ENCODE measurements at regions of chr2 and their contacts with region 1.

Region 1: DNA sequence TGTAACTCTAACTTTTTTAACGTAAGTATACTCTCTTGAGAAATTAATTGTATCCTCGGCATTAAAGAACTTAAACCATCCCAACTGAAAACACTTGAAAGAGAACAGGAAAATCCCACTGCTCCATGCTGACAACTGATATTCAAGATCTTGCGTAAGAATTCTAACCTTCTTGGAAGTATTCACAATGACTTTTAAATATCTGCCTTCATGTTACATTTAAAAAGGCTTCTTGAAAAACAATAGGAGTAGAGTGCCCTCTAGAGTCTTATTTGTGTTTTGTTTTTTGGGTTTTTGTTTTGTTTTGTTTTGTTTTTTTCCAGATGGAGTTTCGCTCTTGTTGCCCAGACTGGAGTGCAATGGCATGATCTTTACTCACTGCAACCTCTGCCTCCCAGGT is 65.4 kb upstream of the DNAJC10 start:
- DNase-seq: peak; percentile 24
- ATAC-seq: no peak
- H3K4me3 ChIP-seq: no peak overlapping the region
- H3K4me3 Mint-ChIP-seq: no peak overlapping the region
- H3K27ac ChIP-seq: no peak overlapping the region
- H3K27ac Mint-ChIP-seq: no peak overlapping the region
- H3K4me1 ChIP-seq: no peaks in the 10 kb centered on the region
- H3K4me1 Mint-ChIP-seq: no peaks in the 10 kb centered on the region
- H3K27me3 ChIP-seq: no peaks in the 10 kb centered on the region
- H3K27me3 Mint-ChIP-seq: peaks cover 8% of the 10 kb centered on the region
- CTCF ChIP-seq: peak; percentile 72

Region 2: DNA sequence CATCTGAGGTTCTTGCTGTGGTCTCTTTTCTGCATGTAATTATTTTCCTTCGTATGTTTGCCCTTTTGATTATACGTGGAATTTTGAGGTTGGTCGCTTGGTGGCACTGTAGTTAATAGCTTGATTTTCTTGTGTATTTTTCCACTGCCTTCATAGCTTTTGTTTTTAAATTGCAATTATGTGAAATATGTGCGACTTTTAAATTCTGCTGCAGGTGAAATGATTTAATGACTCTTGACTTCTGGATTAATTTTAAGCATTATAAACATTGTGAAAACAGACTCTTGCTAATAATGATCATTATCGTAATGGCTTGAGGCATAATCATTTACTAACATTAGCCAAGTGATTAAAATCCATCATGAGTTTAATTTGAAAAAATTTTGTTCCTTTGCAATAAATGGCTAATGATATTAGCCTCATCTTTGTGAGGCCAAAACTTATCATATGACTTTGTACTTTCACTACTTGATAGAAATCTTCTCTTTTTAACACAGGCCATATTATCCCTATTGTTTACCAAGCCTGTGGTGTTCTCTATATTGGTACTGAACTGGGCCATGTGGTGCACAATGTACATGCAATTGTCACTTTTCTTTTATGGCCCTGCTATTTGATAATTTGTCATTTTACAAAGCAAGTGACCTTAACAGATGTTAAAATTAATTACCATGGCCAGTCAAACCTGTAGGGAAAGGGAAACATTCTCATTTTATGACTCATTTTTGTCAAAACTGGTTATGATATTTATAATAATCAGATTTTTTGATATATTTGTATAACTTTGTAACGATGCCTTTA is 907.6 kb before region 1 on chr2:
- CTCF ChIA-PET with region 1: no interaction called
- POLR2A ChIA-PET with region 1: no interaction called
- intact Hi-C with region 1: loop called (anchors 2 kb)
- DNase-seq: peak; percentile 49
- ATAC-seq: no peak
- H3K4me3 ChIP-seq: no peak overlapping the region
- H3K4me3 Mint-ChIP-seq: no peak overlapping the region
- H3K27ac ChIP-seq: no peak overlapping the region
- H3K27ac Mint-ChIP-seq: no peak overlapping the region
- H3K4me1 ChIP-seq: no peaks in the 10 kb centered on the region
- H3K4me1 Mint-ChIP-seq: no peaks in the 10 kb centered on the region
- H3K27me3 ChIP-seq: no peaks in the 10 kb centered on the region
- H3K27me3 Mint-ChIP-seq: peaks cover 4% of the 10 kb centered on the region
- CTCF ChIP-seq: peak; percentile 74

Region 3: GRCh38 chr2:182186132-182186735 is 464.5 kb before region 1 on chr2:
- CTCF ChIA-PET with region 1: interaction called, 8 read pairs
- POLR2A ChIA-PET with region 1: no interaction called
- intact Hi-C with region 1: loop called (anchors 1 kb)
- DNase-seq: peak; percentile 50
- ATAC-seq: peak; percentile 51
- H3K4me3 ChIP-seq: no peak overlapping the region
- H3K4me3 Mint-ChIP-seq: no peak overlapping the region
- H3K27ac ChIP-seq: no peak overlapping the region
- H3K27ac Mint-ChIP-seq: no peak overlapping the region
- H3K4me1 ChIP-seq: no peaks in the 10 kb centered on the region
- H3K4me1 Mint-ChIP-seq: no peaks in the 10 kb centered on the region
- H3K27me3 ChIP-seq: no peaks in the 10 kb centered on the region
- H3K27me3 Mint-ChIP-seq: peaks cover 5% of the 10 kb centered on the region
- CTCF ChIP-seq: peak; percentile 92

Region 4: DNA sequence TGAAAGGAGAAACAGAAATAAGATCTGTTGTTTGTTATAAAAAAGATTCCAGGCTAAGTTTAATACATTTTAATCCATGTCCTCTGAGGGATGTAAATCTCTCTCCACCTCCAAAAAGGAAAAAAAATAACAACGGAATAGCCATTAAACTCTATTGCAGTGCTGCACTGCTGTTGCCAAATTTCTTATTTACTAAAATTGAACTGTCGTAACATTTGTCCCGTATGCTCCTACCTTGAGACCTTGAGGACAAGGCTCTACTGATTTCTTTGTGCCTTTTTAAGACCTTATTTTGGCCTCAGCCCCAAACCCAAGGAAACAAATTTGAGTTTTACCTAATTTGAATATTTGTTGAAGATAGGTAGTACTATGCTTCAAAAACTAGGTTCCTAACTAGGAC is 159.4 kb after region 1 on chr2:
- CTCF ChIA-PET with region 1: no interaction called
- POLR2A ChIA-PET with region 1: no interaction called
- intact Hi-C with region 1: no loop called
- DNase-seq: no peak
- ATAC-seq: no peak
- H3K4me3 ChIP-seq: no peak overlapping the region
- H3K4me3 Mint-ChIP-seq: no peak overlapping the region
- H3K27ac ChIP-seq: no peak overlapping the region
- H3K27ac Mint-ChIP-seq: no peak overlapping the region
- H3K4me1 ChIP-seq: no peaks in the 10 kb centered on the region
- H3K4me1 Mint-ChIP-seq: no peaks in the 10 kb centered on the region
- H3K27me3 ChIP-seq: peaks cover 0 to 14% (median 0%) of the 10 kb centered on the region in 4 experiments
- H3K27me3 Mint-ChIP-seq: peaks cover 11% of the 10 kb centered on the region
- CTCF ChIP-seq: no peak

Measured in B cell (primary cell).